OCI-LY7 (cell line): ENCODE measurements at regions of chr7 and their contacts with region 1.

Region 1: GRCh38 chr7:134113655-134114054 is 13.5 kb upstream of the LRGUK start:
- DNase-seq: no peak
- H3K4me3 ChIP-seq: no peak overlapping the region
- H3K27ac ChIP-seq: no peak overlapping the region
- H3K4me1 ChIP-seq: no peaks in the 10 kb centered on the region
- CTCF ChIP-seq: no peak

Region 2: GRCh38 chr7:134101716-134102115 is 11.9 kb before region 1 on chr7:
- CTCF ChIA-PET with region 1: no interaction called
- POLR2A ChIA-PET with region 1: interaction called, 3 read pairs
- intact Hi-C with region 1: loop called (anchors 1 kb)
- DNase-seq: no peak
- H3K4me3 ChIP-seq: no peak overlapping the region
- H3K27ac ChIP-seq: no peak overlapping the region
- H3K4me1 ChIP-seq: no peaks in the 10 kb centered on the region
- CTCF ChIP-seq: no peak